ENCODE measurements at regions of chr15 and their contacts with region 1.

Region 1: GRCh38 chr15:90954712-90955671 is at the start of gene RCCD1:
- DNase-seq: peak; percentile 92
- H3K4me3 ChIP-seq: peak within 1 kb of the TSS; percentile 32 to 67 (median 63)
- H3K27ac ChIP-seq: peak within 1 kb of the TSS; percentile 96
- H3K4me1 ChIP-seq: peaks cover 13% of the 10 kb centered on the region
- H3K27me3 ChIP-seq: no peaks in the 10 kb centered on the region
- CTCF ChIP-seq: no peak
- POLR2A ChIP-seq: peak; percentile 89
- total RNA-seq, gene RCCD1: 13.3 and 15.3 TPM in 2 replicates

Region 2: GRCh38 chr15:90931737-90932659 is 23.0 kb before region 1 on chr15 and contains the start of gene HDDC3:
- CTCF ChIA-PET with region 1: interaction called, 59 read pairs
- POLR2A ChIA-PET with region 1: no interaction called
- dilution Hi-C with region 1: no loop called
- intact Hi-C with region 1: loop called (anchors 1 kb)
- DNase-seq: peak; percentile 79
- H3K4me3 ChIP-seq: peak within 1 kb of the TSS; percentile 33 to 80 (median 62)
- H3K27ac ChIP-seq: no peak within 1 kb of the TSS
- H3K4me1 ChIP-seq: peaks cover 36% of the 10 kb centered on the region
- H3K27me3 ChIP-seq: no peaks in the 10 kb centered on the region
- CTCF ChIP-seq: peak; percentile 98
- POLR2A ChIP-seq: peak; percentile 74
- total RNA-seq, gene HDDC3: 12.3 and 16.0 TPM in 2 replicates

Region 3: DNA sequence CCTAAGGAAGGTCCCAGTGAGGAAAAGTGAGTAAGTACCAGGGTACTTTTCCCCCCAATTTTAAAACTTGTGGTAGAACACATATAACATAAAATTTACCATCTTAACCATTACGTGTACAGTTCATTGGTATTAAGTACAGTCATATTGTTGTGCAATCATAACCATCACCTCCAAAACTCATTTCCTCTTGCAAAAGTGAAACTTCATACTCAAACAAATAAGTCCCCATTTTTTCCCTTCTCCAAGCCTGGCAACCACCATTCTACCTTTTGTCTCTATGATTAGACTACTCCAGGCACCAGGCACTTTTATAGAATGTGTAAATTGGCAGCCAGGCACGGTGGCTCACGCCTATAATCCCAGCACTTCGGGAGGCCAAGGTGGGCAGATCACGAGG is 27.1 kb after region 1 on chr15:
- CTCF ChIA-PET with region 1: interaction called, 29 read pairs
- POLR2A ChIA-PET with region 1: interaction called, 3 read pairs
- dilution Hi-C with region 1: no loop called
- intact Hi-C with region 1: no loop called
- DNase-seq: no peak
- H3K4me3 ChIP-seq: no peak overlapping the region
- H3K27ac ChIP-seq: no peak overlapping the region
- H3K4me1 ChIP-seq: no peaks in the 10 kb centered on the region
- H3K27me3 ChIP-seq: no peaks in the 10 kb centered on the region
- CTCF ChIP-seq: no peak
- POLR2A ChIP-seq: no peak

Region 4: GRCh38 chr15:91022075-91022835 is 67.3 kb after region 1 on chr15 and contains the start of gene VPS33B:
- CTCF ChIA-PET with region 1: interaction called, 17 read pairs
- POLR2A ChIA-PET with region 1: interaction called, 4 read pairs
- dilution Hi-C with region 1: no loop called
- intact Hi-C with region 1: loop called (anchors 2 kb)
- DNase-seq: peak; percentile 85
- H3K4me3 ChIP-seq: peak within 1 kb of the TSS; percentile 67 to 93 (median 70)
- H3K27ac ChIP-seq: peak within 1 kb of the TSS; percentile 14
- H3K4me1 ChIP-seq: peaks cover 14% of the 10 kb centered on the region
- H3K27me3 ChIP-seq: no peaks in the 10 kb centered on the region
- CTCF ChIP-seq: no peak
- POLR2A ChIP-seq: peak; percentile 52
- total RNA-seq, gene VPS33B: 14.2 and 14.7 TPM in 2 replicates

Region 5: GRCh38 chr15:91049378-91050127 is 94.6 kb after region 1 on chr15:
- CTCF ChIA-PET with region 1: interaction called, 95 read pairs
- POLR2A ChIA-PET with region 1: no interaction called
- dilution Hi-C with region 1: no loop called
- intact Hi-C with region 1: loop called (anchors 1 kb)
- DNase-seq: peak; percentile 66
- H3K4me3 ChIP-seq: no peak overlapping the region
- H3K27ac ChIP-seq: no peak overlapping the region
- H3K4me1 ChIP-seq: no peaks in the 10 kb centered on the region
- H3K27me3 ChIP-seq: peaks cover 9 to 11% of the 10 kb centered on the region in 2 experiments
- CTCF ChIP-seq: peak; percentile 26 to 62
- POLR2A ChIP-seq: no peak

Measured in endothelial cell of umbilical vein (primary cell).